Tibial artery (tissue), 4 donors: ENCODE measurements at regions of chr12 and their contacts with region 1.

Region 1: GRCh38 chr12:113980537-113981337 is 14.6 kb upstream of the RBM19 start:
- DNase-seq: no peak
- H3K4me3 ChIP-seq: no peak overlapping the region
- H3K27ac ChIP-seq: no peak overlapping the region
- H3K4me1 ChIP-seq: no peaks in the 10 kb centered on the region
- H3K27me3 ChIP-seq: peaks cover 0 to 45% of the 10 kb centered on the region in 2 donors
- CTCF ChIP-seq: peak; percentile 87 to 88

Region 2: GRCh38 chr12:114018669-114019068 is 37.9 kb after region 1 on chr12:
- intact Hi-C with region 1: no loop called
- DNase-seq: no peak
- H3K4me3 ChIP-seq: no peak overlapping the region
- H3K27ac ChIP-seq: no peak overlapping the region
- H3K4me1 ChIP-seq: no peaks in the 10 kb centered on the region
- H3K27me3 ChIP-seq: no peaks in the 10 kb centered on the region
- CTCF ChIP-seq: no peak

Region 3: GRCh38 chr12:114476159-114476558 is 495.4 kb after region 1 on chr12:
- intact Hi-C with region 1: no loop called
- DNase-seq: no peak
- H3K4me3 ChIP-seq: no peak overlapping the region
- H3K27ac ChIP-seq: no peak overlapping the region
- H3K4me1 ChIP-seq: peaks cover 0 to 17% (median 9%) of the 10 kb centered on the region in 4 donors
- H3K27me3 ChIP-seq: peaks cover 0 to 63% of the 10 kb centered on the region in 2 donors
- CTCF ChIP-seq: peak in 1 of 2 experiments; percentile 32

Region 4: GRCh38 chr12:114500775-114501473 is 520.2 kb after region 1 on chr12:
- intact Hi-C with region 1: loop called (anchors 5 kb)
- DNase-seq: no peak
- H3K4me3 ChIP-seq: no peak overlapping the region
- H3K27ac ChIP-seq: no peak overlapping the region
- H3K4me1 ChIP-seq: no peaks in the 10 kb centered on the region
- H3K27me3 ChIP-seq: peaks cover 0 to 54% of the 10 kb centered on the region in 2 donors
- CTCF ChIP-seq: no peak

Region 5: DNA sequence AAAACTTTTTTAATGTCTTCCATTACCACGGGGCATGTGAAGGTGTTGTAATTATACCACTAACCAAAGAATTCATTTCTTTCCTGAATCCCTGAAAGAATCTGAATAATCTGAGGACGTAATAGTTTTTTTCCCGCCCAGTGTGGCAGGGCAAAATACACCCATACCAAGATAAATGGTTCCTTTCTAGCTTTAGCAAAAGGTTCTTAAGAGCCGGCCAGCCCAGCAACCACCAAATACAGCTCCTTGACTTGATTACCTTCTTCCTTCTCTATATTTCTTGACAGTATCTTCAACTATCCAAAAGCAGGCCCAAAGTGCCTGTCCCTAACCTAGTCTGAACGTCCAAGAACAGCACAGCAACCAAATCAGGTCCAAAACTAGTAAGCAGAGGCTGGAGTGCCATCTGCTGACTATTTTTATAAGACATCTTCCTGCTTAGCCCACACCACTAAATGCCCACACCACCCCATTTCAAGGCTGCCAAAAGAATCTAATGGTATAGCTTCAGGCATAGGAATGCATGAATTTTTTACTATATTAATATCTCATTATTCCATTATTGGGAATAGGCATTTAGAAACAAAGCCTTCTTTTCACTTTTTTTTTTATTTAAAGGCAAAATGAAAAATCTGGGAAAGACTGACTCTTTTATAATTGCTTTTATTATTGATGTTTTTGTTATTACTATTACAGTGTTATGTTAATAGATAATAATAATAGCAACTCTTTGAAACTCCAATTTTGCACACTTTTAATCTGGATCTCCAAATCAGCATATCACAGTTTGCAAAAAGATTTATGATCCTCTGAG is 1772.4 kb after region 1 on chr12:
- intact Hi-C with region 1: loop called (anchors 10 kb)
- DNase-seq: peak in 1 of 2 donors; percentile 22
- H3K4me3 ChIP-seq: no peak overlapping the region
- H3K27ac ChIP-seq: no peak overlapping the region
- H3K4me1 ChIP-seq: no peaks in the 10 kb centered on the region
- H3K27me3 ChIP-seq: peaks cover 0 to 9% of the 10 kb centered on the region in 2 donors
- CTCF ChIP-seq: peak; percentile 63 to 80

Region 6: DNA sequence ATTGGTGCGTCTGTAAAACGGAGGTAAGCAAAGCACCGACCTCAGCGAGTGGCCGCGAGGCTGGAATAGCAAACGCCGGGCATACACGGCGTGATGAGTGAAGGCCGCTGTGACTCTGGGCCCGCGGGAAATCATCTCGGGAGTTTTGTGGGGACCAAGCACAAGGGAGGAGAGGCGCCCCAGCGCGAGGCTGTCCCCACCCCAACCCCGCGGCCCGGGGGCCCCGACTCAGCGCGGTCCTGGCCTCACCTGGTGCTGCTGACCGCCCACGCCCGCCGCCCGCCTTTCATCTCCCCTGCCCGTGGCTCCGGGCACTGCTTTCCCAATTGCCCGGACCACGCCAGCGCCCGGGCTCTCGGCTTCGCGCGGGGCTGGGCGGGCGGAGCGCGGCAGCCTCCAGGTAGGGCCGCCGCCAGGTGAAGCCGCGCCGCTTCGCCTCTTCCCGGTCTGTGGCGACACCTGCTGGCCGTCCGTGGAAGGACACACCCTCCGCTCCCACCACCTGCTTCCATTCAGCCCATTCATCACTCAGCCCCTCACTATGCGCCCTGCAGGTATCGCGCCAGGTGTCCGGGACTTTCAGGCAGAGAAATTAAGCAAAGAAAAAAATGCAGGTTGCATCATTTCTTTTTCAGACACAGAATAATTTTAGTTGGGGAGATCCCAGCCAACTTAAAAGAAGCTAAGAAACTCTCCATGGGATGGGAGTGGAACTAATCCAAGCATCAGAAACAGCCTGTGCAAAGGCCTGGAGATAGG is 1936.4 kb after region 1 on chr12:
- intact Hi-C with region 1: loop called (anchors 5 kb)
- DNase-seq: peak; percentile 45 to 70
- H3K4me3 ChIP-seq: no peak overlapping the region
- H3K27ac ChIP-seq: no peak overlapping the region
- H3K4me1 ChIP-seq: peaks cover 0 to 7% (median 2%) of the 10 kb centered on the region in 4 donors
- H3K27me3 ChIP-seq: peaks cover 0 to 52% of the 10 kb centered on the region in 2 donors
- CTCF ChIP-seq: peak; percentile 94 to 95